Activated CD4-positive, alpha-beta T cell treated with anti-CD3 and anti-CD28 coated beads, Interleukin-2, amount 10 ng/mL, durations not matched to agents 7 days and 5 days (primary cell): ENCODE measurements at regions of chr19 and their contacts with region 1.

Region 1: DNA sequence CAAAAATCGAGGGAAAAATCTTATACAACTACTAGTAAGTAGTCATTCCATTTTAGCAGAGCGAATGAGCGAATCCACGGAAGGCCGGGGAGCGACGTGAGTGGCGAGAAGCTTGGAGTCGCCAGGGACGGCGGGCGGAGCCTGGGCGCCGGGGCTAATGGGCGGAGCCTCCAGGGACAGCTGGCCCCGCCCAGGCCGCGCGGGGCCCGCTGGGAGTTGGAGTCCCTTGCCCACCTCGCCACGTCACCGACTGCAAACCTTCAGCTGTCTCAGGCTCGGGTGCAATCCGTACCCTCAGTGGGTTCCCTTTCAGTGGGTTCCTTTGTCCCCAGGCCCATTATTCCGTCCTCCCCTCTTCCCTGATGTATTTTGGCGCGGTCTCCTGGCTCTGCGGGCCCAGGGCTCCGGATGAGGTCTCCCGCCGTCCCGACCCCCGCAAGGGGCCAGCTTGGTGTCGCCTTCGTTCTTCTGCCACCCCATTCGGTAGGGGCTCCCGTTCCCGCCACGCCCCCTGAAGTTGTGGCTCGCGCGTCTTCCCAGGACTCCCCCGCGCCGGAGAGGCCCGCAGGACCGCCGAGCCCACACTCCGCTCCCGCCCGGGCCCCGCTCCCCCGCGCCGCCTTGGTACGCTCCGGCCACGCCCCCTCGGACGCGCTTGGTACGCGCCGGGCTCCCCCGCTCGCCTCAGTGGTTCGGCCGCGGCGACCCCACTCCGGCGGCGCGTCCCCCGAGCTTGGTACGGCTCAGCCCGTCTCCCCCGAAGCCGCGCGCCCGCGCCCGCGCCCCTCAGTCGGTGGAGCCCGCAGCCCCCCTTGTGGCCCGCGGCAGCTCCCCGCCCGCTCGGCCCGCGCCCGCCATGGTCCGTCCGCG is at the start of gene PTOV1:
- DNase-seq: peak; percentile 90
- H3K4me3 Mint-ChIP-seq: peak within 1 kb of the TSS; percentile 88
- H3K27ac Mint-ChIP-seq: peak within 1 kb of the TSS; percentile 98
- H3K4me1 Mint-ChIP-seq: peaks cover 39% of the 10 kb centered on the region
- H3K27me3 Mint-ChIP-seq: peaks cover 11% of the 10 kb centered on the region
- total RNA-seq, gene PTOV1: 60.7 to 76.8 TPM

Region 2: GRCh38 chr19:49832556-49832955 is 18.2 kb before region 1 on chr19:
- CTCF ChIA-PET with region 1: interaction called, 13 read pairs
- POLR2A ChIA-PET with region 1: no interaction called
- DNase-seq: no peak
- H3K4me3 Mint-ChIP-seq: no peak overlapping the region
- H3K27ac Mint-ChIP-seq: no peak overlapping the region
- H3K4me1 Mint-ChIP-seq: peaks cover 18% of the 10 kb centered on the region
- H3K27me3 Mint-ChIP-seq: no peaks in the 10 kb centered on the region